Colonic mucosa (tissue), 4 donors: ENCODE measurements at regions of chr5 and their contacts with region 1.

Region 1: DNA sequence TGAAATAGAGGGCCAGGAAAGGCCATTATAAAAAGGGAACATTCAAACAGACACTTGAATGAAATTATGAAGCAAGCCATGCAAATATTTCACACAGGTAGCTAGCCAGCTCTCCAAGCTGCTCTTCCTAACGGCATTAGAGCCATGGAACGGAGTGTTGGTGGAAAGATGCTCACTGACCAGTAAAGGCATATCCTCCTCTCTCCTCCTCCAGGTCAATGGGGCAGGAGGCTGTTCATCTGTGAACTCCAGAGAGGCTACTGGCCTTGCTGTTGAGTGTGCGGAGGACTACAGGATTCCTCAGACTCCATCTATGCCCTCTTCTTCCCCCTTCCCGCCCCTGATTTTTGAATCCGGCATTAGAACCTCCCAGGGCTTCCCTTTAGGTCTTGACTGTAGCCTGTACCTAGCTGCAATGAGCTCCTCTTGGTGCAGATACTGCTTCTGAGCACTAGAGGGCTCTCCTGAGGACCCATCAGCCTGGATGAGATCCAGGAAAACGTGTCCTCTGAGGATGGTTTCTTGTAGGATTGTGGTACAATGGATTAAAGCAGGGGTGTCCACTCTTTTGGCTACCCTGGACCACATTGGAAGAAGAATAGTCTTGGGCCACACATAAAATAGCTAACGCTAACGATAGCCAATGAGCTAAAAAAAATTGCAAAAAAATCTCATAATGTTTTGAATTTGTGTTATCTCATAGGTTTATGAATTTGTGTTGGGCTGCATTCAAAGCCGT is 162.2 kb downstream of the SREK1 start:
- DNase-seq: peak; percentile 45
- H3K4me3 ChIP-seq: no peak overlapping the region
- H3K27ac ChIP-seq: no peak overlapping the region
- H3K4me1 ChIP-seq: no peaks in the 10 kb centered on the region
- H3K27me3 ChIP-seq: no peaks in the 10 kb centered on the region
- CTCF ChIP-seq: peak; percentile 65

Region 2: GRCh38 chr5:66066826-66067225 is 239.4 kb before region 1 on chr5:
- intact Hi-C with region 1: no loop called
- DNase-seq: no peak
- H3K4me3 ChIP-seq: no peak overlapping the region
- H3K27ac ChIP-seq: no peak overlapping the region
- H3K4me1 ChIP-seq: no peaks in the 10 kb centered on the region
- H3K27me3 ChIP-seq: no peaks in the 10 kb centered on the region
- CTCF ChIP-seq: no peak

Region 3: GRCh38 chr5:66273121-66273520 is 33.2 kb before region 1 on chr5:
- intact Hi-C with region 1: no loop called
- DNase-seq: no peak
- H3K4me3 ChIP-seq: no peak overlapping the region
- H3K27ac ChIP-seq: no peak overlapping the region
- H3K4me1 ChIP-seq: no peaks in the 10 kb centered on the region
- H3K27me3 ChIP-seq: no peaks in the 10 kb centered on the region
- CTCF ChIP-seq: no peak

Region 4: GRCh38 chr5:66757188-66757833 is 451.0 kb after region 1 on chr5:
- intact Hi-C with region 1: loop called (anchors 2 kb)
- DNase-seq: no peak
- H3K4me3 ChIP-seq: no peak overlapping the region
- H3K27ac ChIP-seq: no peak overlapping the region
- H3K4me1 ChIP-seq: no peaks in the 10 kb centered on the region
- H3K27me3 ChIP-seq: no peaks in the 10 kb centered on the region
- CTCF ChIP-seq: peak; percentile 29